ENCODE measurements at regions of chr11 and their contacts with region 1.

Region 1: DNA sequence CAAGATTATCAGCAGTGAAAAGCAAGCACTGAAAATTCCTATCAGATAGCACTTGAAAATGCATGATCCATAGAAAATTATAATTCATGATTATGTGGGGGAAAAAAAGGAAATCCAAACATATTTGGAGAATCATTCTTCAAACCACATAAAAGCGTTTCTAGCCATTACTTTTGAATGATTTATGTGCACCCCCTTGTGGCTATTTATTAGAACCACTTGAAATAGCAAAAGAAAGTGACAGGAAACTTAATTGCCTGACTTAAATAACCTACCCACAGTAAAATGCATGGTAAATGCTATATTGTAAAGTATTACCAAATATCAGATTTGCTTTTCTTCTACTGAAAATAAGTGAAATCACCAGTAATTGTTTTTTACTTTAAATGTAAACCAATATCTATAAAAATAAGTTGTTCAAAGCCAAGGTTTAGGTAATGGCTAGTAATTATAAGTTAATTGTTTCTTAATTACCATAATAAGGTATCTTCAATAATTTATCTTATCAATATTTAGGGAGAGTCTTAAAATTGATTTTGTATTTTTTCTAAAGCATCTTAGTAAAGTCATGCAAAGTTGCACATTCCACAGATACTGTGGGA is 168.5 kb downstream of the ARHGAP42 start:
- DNase-seq: no peak

Region 2: GRCh38 chr11:100687630-100688395 is 167.8 kb before region 1 on chr11:
- intact Hi-C with region 1: loop called (anchors 5 kb)
- DNase-seq: peak in 7 of 10 donors; percentile 9 to 83 (median 24)

Measured in posterior cingulate gyrus (tissue), 11 donors.